BJ (cell line): ENCODE measurements at regions of chr10 and their contacts with region 1.

Region 1: DNA sequence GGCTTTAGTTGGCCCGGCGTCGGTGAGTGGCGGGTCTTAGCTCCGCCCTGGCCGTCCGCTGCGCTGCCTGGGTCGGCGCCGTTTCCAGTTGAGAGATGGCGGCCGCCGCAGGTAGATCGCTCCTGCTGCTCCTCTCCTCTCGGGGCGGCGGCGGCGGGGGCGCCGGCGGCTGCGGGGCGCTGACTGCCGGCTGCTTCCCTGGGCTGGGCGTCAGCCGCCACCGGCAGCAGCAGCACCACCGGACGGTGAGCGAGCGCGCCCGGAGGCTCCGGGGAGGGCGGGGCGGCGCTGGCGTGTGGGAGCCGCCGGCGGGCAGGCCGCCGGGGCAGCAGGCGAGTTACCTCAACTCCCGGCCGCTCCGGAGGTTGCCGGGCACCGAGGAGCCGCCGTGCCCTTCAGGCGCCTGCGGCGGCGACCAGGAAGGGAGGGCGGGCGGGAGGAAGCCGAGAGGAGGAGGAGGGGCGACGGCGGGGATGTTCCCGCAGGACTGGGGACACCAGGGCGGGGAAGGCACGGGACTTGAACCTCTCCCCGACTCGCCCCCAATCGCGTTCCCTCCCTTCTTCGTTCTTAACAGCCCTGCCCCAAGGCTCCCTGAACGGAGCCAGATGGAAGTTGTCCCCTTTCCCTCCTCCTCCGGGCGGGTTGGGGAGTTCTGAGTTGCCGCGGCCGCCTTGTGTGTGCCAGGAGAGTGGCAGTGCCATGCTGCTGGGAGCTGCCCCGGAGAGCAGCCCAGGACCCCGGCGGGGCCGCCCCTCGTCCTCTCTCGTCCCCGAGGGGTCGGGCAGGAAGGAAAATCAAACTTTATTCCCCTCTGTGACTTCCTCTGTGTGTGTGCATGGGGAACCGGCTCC is at the start of gene MCU:
- DNase-seq: peak; percentile 62
- H3K4me3 ChIP-seq: peak within 1 kb of the TSS; percentile 93
- H3K27me3 ChIP-seq: no peaks in the 10 kb centered on the region
- CTCF ChIP-seq: no peak
- polyA plus RNA-seq, gene MCU: 78.7 and 95.7 TPM in 2 replicates

Region 2: DNA sequence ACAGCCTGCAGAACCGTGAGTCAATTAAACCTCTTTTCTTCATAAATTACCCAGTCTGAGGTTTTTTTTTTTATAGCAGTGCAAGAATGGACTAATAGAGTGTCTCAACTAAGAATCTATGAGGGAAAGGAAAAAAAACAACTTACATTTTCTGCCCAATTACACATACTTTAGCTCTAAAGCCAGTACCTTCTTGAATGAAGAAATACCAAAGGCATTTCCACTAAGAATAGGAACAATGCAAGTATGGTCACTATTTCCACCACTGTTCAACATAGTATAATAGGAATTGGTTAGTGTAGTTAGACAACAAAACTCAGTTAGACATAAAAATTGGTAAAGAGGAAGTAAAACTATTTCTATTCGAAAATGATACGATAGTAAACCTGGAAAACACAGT is 104.0 kb before region 1 on chr10:
- CTCF ChIA-PET with region 1: no interaction called
- POLR2A ChIA-PET with region 1: no interaction called
- DNase-seq: no peak
- H3K4me3 ChIP-seq: no peak overlapping the region
- H3K27me3 ChIP-seq: no peaks in the 10 kb centered on the region
- CTCF ChIP-seq: no peak

Region 3: DNA sequence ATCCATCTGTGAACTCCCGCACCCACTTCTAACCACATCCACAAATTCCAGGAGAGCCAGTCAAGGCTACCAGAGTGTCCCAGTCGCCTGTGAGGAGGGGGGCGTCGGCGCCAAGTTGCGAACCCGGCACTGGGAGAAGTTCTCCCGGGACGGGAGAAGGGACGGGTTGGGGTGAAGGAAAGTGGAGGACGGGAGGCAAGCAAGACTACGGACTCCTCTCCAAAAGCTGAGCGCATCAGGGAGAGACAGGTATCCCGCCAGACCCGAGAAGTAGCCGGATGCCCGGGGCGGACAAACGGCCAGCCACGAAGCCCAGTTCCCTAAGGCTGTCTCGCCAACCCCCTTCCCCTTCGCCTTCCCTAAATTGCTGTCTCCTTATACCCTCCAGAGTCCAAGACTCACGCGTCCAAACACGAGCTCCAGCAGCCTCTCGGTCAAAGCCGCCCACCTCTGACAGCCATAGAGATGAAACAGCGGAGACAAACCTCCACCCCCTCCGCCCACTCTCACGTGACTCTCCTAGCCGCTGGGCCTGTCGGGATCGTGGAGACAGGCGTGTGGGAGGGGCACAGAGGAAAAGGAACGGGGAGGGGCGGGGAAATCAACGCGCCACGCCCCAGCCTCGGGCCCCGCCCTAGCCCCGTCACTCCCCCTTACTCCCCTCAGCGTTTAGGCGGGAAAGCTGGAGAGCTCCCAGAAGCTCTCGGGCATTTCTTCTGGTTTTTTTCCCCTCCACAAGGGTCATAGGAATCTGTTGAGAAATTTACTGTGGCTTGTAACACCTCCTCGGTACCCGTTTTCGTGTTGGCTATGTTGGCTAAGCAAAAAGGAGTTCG is 66.5 kb before region 1 on chr10 and contains the start of gene MICU1:
- CTCF ChIA-PET with region 1: interaction called, 5 read pairs
- POLR2A ChIA-PET with region 1: interaction called, 12 read pairs
- DNase-seq: peak; percentile 74
- H3K4me3 ChIP-seq: peak within 1 kb of the TSS; percentile 81
- H3K27me3 ChIP-seq: no peaks in the 10 kb centered on the region
- CTCF ChIP-seq: no peak
- polyA plus RNA-seq, gene MICU1: 40.4 and 42.4 TPM in 2 replicates

Region 4: DNA sequence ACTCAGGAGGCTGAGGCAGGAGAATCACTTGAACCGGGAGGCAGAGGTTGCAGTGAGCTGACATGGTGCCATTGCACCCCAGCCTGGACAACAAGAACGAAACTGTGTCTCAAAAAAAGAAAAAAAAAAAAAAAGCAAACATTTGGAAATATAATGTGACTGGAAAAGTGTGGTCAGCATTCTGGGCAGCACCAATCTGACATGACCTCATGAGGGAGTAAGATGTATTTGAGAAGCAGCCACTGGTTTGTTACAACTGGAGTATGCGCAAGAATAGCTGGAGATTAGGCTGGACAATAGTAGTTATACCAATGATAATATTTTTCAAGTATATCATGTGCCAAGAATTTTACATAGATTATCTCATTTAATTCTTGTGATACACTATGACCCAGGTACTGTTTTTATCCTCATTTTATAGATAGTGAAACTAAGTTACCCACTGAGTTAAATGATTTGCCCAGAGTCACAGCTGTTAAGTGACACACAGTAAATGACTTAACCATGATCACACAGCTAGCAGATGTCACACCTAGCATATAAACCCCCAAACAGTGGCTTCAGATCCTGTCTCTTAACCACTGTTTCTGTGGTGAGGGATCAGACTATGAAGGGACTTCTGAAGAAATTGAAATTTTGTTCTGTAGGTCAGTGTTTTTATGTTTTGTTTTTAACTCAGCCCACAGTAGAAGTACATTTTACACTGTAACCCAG is 10.7 kb after region 1 on chr10:
- CTCF ChIA-PET with region 1: no interaction called
- POLR2A ChIA-PET with region 1: interaction called, 10 read pairs
- DNase-seq: no peak
- H3K4me3 ChIP-seq: no peak overlapping the region
- H3K27me3 ChIP-seq: no peaks in the 10 kb centered on the region
- CTCF ChIP-seq: no peak

Region 5: GRCh38 chr10:72719718-72720592 is 27.7 kb after region 1 on chr10:
- CTCF ChIA-PET with region 1: no interaction called
- POLR2A ChIA-PET with region 1: no interaction called
- DNase-seq: no peak
- H3K4me3 ChIP-seq: no peak overlapping the region
- H3K27me3 ChIP-seq: no peaks in the 10 kb centered on the region
- CTCF ChIP-seq: no peak

Region 6: DNA sequence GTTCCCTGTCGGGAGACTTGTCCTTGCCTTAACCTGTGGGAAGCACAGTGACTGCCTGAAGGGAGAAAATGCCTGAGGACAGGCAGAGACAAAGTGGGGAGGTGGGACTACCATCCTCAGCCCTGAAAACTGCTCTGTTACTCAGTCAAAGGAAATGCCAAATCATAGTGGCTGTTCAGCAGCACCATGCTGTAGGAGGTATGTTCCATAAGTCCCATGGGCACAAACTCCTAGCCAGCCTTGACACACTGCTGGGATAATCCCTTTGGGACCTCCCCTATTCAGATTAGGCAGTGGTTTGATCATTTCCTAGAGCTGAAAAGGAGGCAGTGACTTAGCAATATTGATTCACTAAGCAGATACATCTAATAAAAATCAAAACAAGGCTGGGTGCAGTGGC is 79.7 kb after region 1 on chr10:
- CTCF ChIA-PET with region 1: no interaction called
- POLR2A ChIA-PET with region 1: no interaction called
- DNase-seq: no peak
- H3K4me3 ChIP-seq: no peak overlapping the region
- H3K27me3 ChIP-seq: no peaks in the 10 kb centered on the region
- CTCF ChIP-seq: no peak

Region 7: DNA sequence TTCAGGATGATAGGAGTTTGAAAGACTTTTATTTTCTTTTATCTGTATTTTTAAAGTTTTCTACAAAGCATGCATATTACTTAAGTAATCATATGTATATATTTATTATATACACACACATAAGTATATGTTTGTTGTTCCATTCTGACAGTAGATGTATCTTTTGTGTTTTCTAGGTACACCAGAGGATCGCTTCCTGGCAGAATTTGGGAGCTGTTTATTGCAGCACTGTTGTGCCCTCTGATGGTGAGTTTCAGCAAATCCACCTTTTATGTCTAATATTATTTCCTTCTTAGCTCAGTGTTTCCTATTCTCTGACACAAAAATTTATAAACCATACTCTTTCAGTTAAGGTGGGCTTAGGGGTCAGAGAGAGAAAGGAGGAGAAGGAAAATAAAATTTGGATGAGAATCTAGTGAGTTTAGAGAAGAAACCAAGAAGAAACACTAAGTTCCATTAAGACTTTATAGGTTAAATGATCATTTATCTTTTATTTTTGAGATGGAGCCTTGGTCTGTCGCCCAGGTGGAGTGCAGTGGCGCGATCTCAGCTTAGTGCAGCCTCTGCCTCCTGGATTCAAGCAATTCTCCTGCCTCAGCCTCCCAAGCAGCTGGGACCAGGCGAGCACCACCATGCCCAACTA is 142.0 kb after region 1 on chr10:
- CTCF ChIA-PET with region 1: interaction called, 62 read pairs
- POLR2A ChIA-PET with region 1: interaction called, 5 read pairs
- DNase-seq: peak; percentile 4
- H3K4me3 ChIP-seq: no peak overlapping the region
- H3K27me3 ChIP-seq: no peaks in the 10 kb centered on the region
- CTCF ChIP-seq: peak; percentile 58